Activated naive CD8-positive, alpha-beta T cell treated with anti-CD3 and anti-CD28 coated beads, Interleukin-2, amount 10 ng/mL, durations not matched to agents 7 days and 5 days (primary cell): ENCODE measurements at regions of chr1 and their contacts with region 1.

Region 1: GRCh38 chr1:89125913-89126580 is at the start of gene GBP2:
- DNase-seq: no peak
- ATAC-seq: peak; percentile 75
- H3K4me3 Mint-ChIP-seq: peak within 1 kb of the TSS; percentile 100
- H3K27ac Mint-ChIP-seq: peak within 1 kb of the TSS; percentile 98
- H3K4me1 Mint-ChIP-seq: peaks cover 49% of the 10 kb centered on the region
- H3K27me3 Mint-ChIP-seq: no peaks in the 10 kb centered on the region
- total RNA-seq, gene GBP2: 170 to 179 TPM

Region 2: DNA sequence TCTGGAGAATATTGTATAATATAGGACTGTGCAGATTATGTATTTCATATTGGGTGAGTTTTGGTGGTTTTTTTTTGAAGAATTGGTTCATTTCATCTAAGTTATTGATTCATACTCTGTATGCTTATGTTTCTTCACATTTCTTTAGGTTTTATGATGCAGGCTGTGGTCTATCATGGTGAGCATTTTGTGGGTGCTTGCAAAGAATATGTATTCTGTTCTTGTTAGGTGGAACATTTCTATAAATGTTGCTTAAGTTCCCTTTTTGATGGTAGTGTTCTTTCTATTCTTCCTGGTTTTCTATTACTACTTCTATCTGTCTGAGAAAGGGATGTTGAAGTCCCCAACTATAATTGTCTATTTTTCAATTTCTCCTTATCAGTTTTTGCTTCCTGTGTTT is 399.4 kb before region 1 on chr1:
- POLR2A ChIA-PET with region 1: no interaction called
- DNase-seq: no peak
- ATAC-seq: no peak
- H3K4me3 Mint-ChIP-seq: no peak overlapping the region
- H3K27ac Mint-ChIP-seq: no peak overlapping the region
- H3K4me1 Mint-ChIP-seq: peaks cover 14% of the 10 kb centered on the region
- H3K27me3 Mint-ChIP-seq: no peaks in the 10 kb centered on the region

Region 3: DNA sequence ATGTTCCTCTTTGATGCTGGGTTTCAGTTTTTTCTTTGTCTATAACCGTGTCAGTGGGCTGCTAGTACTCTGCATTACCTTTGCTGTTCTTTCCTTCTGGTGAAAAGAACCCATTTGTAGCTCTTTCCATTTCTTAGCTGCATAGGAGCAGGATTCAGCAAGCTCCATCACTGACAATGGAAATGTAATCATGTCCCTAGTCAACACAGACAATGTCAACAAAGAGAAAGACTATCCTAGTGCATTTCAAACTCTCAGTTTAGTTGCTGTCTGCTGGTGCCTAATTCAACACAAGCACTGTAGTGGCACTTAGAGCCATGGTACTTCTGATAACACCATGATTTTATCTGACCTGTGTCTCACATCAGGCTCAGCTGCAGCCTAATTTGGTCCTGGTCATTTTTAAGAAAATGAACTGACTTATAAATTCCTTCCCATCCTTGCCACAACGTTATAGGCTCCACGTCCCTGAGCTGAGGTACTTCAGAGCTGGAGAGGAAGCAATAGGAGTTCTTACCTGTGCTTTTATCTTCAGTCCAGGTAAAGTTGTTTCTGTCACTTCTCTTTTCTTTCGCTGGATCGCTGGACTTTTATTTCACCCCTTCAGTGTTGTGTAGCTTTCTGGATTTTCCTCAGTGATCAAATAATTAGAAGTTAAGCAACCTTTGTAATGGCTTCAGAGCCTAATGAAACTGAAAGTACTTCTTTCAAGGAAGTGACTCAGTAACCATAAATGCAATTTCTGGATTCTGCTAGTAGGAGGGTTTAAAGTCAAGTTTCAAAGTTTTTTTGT is 103.7 kb before region 1 on chr1 and contains the start of gene GBP3:
- POLR2A ChIA-PET with region 1: interaction called, 24 read pairs
- DNase-seq: no peak
- ATAC-seq: peak; percentile 75
- H3K4me3 Mint-ChIP-seq: peak within 1 kb of the TSS; percentile 90
- H3K27ac Mint-ChIP-seq: peak within 1 kb of the TSS; percentile 85
- H3K4me1 Mint-ChIP-seq: peaks cover 34% of the 10 kb centered on the region
- H3K27me3 Mint-ChIP-seq: no peaks in the 10 kb centered on the region
- total RNA-seq, gene GBP3: 45.9 to 50.7 TPM

Region 4: GRCh38 chr1:89114662-89115061 is 11.4 kb before region 1 on chr1:
- POLR2A ChIA-PET with region 1: interaction called, 18 read pairs
- DNase-seq: no peak
- ATAC-seq: no peak
- H3K4me3 Mint-ChIP-seq: no peak overlapping the region
- H3K27ac Mint-ChIP-seq: no peak overlapping the region
- H3K4me1 Mint-ChIP-seq: peaks cover 15% of the 10 kb centered on the region
- H3K27me3 Mint-ChIP-seq: no peaks in the 10 kb centered on the region

Region 5: DNA sequence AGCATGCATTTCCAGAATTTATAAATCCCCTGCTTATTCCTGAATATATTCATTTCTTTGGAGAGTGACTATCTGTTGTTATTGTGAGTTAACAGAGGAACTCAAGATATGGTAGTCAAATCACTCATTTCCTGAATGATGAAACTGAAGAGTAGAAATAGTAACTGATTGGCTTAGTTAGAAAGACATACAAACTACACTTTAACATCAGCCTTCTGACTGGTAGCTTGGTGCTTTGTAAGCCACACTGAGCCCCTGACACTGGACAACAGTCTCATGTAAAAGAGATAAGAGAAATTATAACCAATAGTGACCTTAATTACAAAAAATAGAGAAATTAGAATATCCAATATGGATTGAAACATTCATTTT is 45.0 kb after region 1 on chr1:
- POLR2A ChIA-PET with region 1: no interaction called
- DNase-seq: no peak
- ATAC-seq: no peak
- H3K4me3 Mint-ChIP-seq: no peak overlapping the region
- H3K27ac Mint-ChIP-seq: peak overlapping the region; percentile 27
- H3K4me1 Mint-ChIP-seq: peaks cover 3% of the 10 kb centered on the region
- H3K27me3 Mint-ChIP-seq: no peaks in the 10 kb centered on the region

Region 6: GRCh38 chr1:89261926-89262515 is 136.0 kb after region 1 on chr1:
- POLR2A ChIA-PET with region 1: interaction called, 34 read pairs
- DNase-seq: no peak
- ATAC-seq: no peak
- H3K4me3 Mint-ChIP-seq: peak overlapping the region; percentile 77
- H3K27ac Mint-ChIP-seq: peak overlapping the region; percentile 71
- H3K4me1 Mint-ChIP-seq: peaks cover 66% of the 10 kb centered on the region
- H3K27me3 Mint-ChIP-seq: no peaks in the 10 kb centered on the region

Region 7: GRCh38 chr1:89286549-89287180 is 160.6 kb after region 1 on chr1:
- POLR2A ChIA-PET with region 1: interaction called, 12 read pairs
- DNase-seq: no peak
- ATAC-seq: peak; percentile 88
- H3K4me3 Mint-ChIP-seq: peak overlapping the region; percentile 67
- H3K27ac Mint-ChIP-seq: peak overlapping the region; percentile 95
- H3K4me1 Mint-ChIP-seq: peaks cover 54% of the 10 kb centered on the region
- H3K27me3 Mint-ChIP-seq: no peaks in the 10 kb centered on the region